ENCODE measurements at regions of chr11 and their contacts with region 1.

Region 1: DNA sequence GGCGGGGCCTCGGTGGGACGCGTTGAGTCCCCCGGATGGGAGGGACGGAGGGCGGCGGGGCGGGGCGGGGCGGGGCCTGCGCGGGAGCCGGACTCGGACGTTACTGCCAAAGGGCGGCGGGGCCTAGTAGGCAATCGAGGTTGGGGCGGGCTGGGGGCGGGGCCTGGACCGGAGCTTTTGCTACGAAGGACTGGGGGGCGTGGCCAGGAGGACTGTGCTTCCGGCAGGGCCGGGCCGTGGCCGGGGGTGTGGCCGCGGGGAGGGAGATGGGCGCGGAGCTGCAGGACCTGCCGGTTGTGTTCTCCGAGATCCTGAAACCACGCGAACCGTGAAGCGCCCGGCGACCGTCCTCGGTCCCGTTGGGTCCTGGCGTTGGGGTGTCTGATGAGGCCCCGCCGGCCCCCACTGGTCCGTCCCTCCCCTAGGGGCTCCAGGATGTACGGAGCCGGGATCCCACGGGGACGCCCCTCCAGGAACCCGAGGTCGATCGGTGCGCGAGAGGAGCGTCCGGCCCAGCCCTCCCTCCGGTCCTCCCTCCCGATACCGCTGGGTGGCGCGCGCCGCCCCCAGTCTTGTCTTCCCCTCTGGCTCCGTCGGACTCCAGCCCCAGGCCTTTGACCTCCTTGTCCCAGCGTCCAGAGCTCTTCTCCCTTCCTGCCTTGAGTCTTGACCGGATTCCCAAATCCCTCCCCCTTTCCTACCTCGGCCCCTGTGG is 648 bp upstream of the NUDT8 start:
- DNase-seq: peak; percentile 100
- H3K4me3 ChIP-seq: peak overlapping the region; percentile 88
- H3K4me3 Mint-ChIP-seq: peak overlapping the region; percentile 76
- H3K27ac Mint-ChIP-seq: peak overlapping the region; percentile 86
- H3K4me1 ChIP-seq: peaks cover 11% of the 10 kb centered on the region
- H3K4me1 Mint-ChIP-seq: peaks cover 7% of the 10 kb centered on the region
- H3K27me3 ChIP-seq: no peaks in the 10 kb centered on the region
- H3K27me3 Mint-ChIP-seq: no peaks in the 10 kb centered on the region
- CTCF ChIP-seq: peak; percentile 97 to 98

Region 2: DNA sequence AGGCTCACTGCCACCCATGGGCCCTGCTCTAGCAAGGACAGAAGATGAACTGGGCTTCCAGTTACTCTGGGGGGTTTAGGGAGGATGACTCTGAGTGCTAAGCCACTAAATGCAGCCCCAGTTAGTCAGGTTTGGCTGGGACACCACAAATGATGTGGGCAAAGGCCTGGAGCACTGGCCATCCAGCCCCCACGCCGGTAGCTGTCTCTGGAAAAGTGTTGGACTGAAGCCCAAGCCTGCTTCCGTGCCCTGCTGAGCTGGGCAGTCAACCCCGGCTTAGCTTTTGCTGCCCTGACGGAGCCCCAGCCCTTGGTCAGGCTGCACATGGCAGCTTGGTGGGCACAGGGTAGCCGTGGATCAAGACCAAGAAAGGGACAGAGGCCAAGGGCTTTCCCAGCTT is 52.4 kb before region 1 on chr11:
- CTCF ChIA-PET with region 1: interaction called, 12 read pairs
- POLR2A ChIA-PET with region 1: interaction called, 6 read pairs
- intact Hi-C with region 1: loop called (anchors 1 kb)
- DNase-seq: no peak
- H3K4me3 ChIP-seq: no peak overlapping the region
- H3K4me3 Mint-ChIP-seq: no peak overlapping the region
- H3K27ac Mint-ChIP-seq: no peak overlapping the region
- H3K4me1 ChIP-seq: peaks cover 60% of the 10 kb centered on the region
- H3K4me1 Mint-ChIP-seq: peaks cover 58% of the 10 kb centered on the region
- H3K27me3 ChIP-seq: no peaks in the 10 kb centered on the region
- H3K27me3 Mint-ChIP-seq: no peaks in the 10 kb centered on the region
- CTCF ChIP-seq: no peak

Region 3: DNA sequence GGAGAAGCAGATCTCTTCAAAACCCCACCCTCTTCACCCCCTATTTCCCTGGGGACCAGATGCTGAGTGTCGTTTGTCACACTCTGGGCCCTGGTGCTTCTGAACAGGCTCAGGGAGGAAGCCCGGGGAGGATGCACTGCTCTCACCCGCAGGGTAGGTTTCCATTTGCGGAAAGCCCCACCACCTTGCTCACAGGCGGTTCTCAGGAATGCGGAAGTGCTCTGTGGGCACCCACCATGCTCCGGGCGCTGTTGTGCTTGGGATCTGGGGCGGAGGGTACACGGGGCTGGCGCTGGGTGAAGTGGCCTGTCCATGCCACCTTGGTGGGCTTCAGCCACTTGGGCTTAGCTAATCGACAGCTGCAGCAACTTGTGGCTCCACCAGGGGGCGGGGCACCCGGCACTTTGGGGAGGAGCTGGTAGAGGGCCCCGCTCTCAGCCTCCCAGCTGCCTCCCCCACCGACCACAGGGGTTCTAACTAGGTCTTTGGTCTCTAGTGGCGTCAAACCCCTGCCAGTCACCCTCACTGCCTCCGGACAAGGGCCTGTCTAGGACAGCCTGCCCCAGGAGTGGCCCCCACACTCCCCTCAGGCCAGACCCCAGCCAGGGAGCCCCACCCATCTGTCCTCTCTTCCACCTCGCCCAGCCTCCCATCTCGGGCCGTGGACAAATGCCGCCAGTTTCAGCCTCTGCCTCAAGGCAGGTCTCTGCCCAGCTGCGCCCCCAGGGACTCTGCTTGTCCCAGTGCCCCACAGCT is 16.2 kb before region 1 on chr11:
- CTCF ChIA-PET with region 1: interaction called, 36 read pairs
- POLR2A ChIA-PET with region 1: interaction called, 12 read pairs
- intact Hi-C with region 1: no loop called
- DNase-seq: peak; percentile 74 to 85
- H3K4me3 ChIP-seq: no peak overlapping the region
- H3K4me3 Mint-ChIP-seq: no peak overlapping the region
- H3K27ac Mint-ChIP-seq: no peak overlapping the region
- H3K4me1 ChIP-seq: no peaks in the 10 kb centered on the region
- H3K4me1 Mint-ChIP-seq: peaks cover 6% of the 10 kb centered on the region
- H3K27me3 ChIP-seq: no peaks in the 10 kb centered on the region
- H3K27me3 Mint-ChIP-seq: no peaks in the 10 kb centered on the region
- CTCF ChIP-seq: peak; percentile 89 to 92

Region 4: GRCh38 chr11:67656278-67656922 is 26.0 kb after region 1 on chr11:
- CTCF ChIA-PET with region 1: interaction called, 51 read pairs
- POLR2A ChIA-PET with region 1: interaction called, 4 read pairs
- intact Hi-C with region 1: loop called (anchors 1 kb)
- DNase-seq: peak in 1 of 2 experiments; percentile 8
- H3K4me3 ChIP-seq: no peak overlapping the region
- H3K4me3 Mint-ChIP-seq: no peak overlapping the region
- H3K27ac Mint-ChIP-seq: no peak overlapping the region
- H3K4me1 ChIP-seq: no peaks in the 10 kb centered on the region
- H3K4me1 Mint-ChIP-seq: peaks cover 8% of the 10 kb centered on the region
- H3K27me3 ChIP-seq: no peaks in the 10 kb centered on the region
- H3K27me3 Mint-ChIP-seq: no peaks in the 10 kb centered on the region
- CTCF ChIP-seq: no peak

Region 5: GRCh38 chr11:68043349-68044144 is 413.2 kb after region 1 on chr11:
- CTCF ChIA-PET with region 1: no interaction called
- POLR2A ChIA-PET with region 1: no interaction called
- intact Hi-C with region 1: no loop called
- DNase-seq: peak; percentile 50 to 71
- H3K4me3 ChIP-seq: no peak overlapping the region
- H3K4me3 Mint-ChIP-seq: no peak overlapping the region
- H3K27ac Mint-ChIP-seq: no peak overlapping the region
- H3K4me1 ChIP-seq: peaks cover 26% of the 10 kb centered on the region
- H3K4me1 Mint-ChIP-seq: peaks cover 8% of the 10 kb centered on the region
- H3K27me3 ChIP-seq: no peaks in the 10 kb centered on the region
- H3K27me3 Mint-ChIP-seq: no peaks in the 10 kb centered on the region
- CTCF ChIP-seq: no peak